ENCODE measurements at regions of chr17 and their contacts with region 1.

Region 1: GRCh38 chr17:44708401-44709181 is at the start of gene DBF4B:
- DNase-seq: peak; percentile 49 to 92 (median 86)
- ATAC-seq: peak; percentile 99
- H3K4me3 ChIP-seq: peak within 1 kb of the TSS; percentile 91
- H3K4me3 Mint-ChIP-seq: peak within 1 kb of the TSS in 1 of 10 donors; percentile 79
- H3K27ac ChIP-seq: peak within 1 kb of the TSS; percentile 62
- H3K27ac Mint-ChIP-seq: peak within 1 kb of the TSS in 1 of 9 donors; percentile 72
- H3K4me1 ChIP-seq: peaks cover 14 to 15% of the 10 kb centered on the region in 2 donors
- H3K4me1 Mint-ChIP-seq: peaks cover 0 to 7% (median 4%) of the 10 kb centered on the region in 7 donors
- H3K27me3 ChIP-seq: no peaks in the 10 kb centered on the region
- H3K27me3 Mint-ChIP-seq: peaks cover 0 to 9% (median 4%) of the 10 kb centered on the region in 5 donors
- total RNA-seq, gene DBF4B: 2.8 to 23.1 (median 7.8) TPM

Region 2: GRCh38 chr17:44689477-44690217 is 18.9 kb before region 1 on chr17 and contains the start of gene CCDC43:
- CTCF ChIA-PET with region 1: interaction called, 6 read pairs
- POLR2A ChIA-PET with region 1: interaction called, 32 read pairs
- intact Hi-C with region 1: loop called (anchors 1 kb)
- DNase-seq: peak; percentile 86 to 94 (median 92)
- ATAC-seq: peak; percentile 99
- H3K4me3 ChIP-seq: peak within 1 kb of the TSS; percentile 94
- H3K4me3 Mint-ChIP-seq: peak within 1 kb of the TSS; percentile 92 to 99 (median 98)
- H3K27ac ChIP-seq: peak within 1 kb of the TSS; percentile 90
- H3K27ac Mint-ChIP-seq: peak within 1 kb of the TSS; percentile 95 to 98 (median 96)
- H3K4me1 ChIP-seq: peaks cover 13 to 14% of the 10 kb centered on the region in 2 donors
- H3K4me1 Mint-ChIP-seq: peaks cover 24 to 50% (median 26%) of the 10 kb centered on the region in 7 donors
- H3K27me3 ChIP-seq: no peaks in the 10 kb centered on the region
- H3K27me3 Mint-ChIP-seq: no peaks in the 10 kb centered on the region
- total RNA-seq, gene CCDC43: 15.0 to 29.1 (median 20.2) TPM